Heart left ventricle (tissue), 16 donors: ENCODE measurements at regions of chr16 and their contacts with region 1.

Region 1: DNA sequence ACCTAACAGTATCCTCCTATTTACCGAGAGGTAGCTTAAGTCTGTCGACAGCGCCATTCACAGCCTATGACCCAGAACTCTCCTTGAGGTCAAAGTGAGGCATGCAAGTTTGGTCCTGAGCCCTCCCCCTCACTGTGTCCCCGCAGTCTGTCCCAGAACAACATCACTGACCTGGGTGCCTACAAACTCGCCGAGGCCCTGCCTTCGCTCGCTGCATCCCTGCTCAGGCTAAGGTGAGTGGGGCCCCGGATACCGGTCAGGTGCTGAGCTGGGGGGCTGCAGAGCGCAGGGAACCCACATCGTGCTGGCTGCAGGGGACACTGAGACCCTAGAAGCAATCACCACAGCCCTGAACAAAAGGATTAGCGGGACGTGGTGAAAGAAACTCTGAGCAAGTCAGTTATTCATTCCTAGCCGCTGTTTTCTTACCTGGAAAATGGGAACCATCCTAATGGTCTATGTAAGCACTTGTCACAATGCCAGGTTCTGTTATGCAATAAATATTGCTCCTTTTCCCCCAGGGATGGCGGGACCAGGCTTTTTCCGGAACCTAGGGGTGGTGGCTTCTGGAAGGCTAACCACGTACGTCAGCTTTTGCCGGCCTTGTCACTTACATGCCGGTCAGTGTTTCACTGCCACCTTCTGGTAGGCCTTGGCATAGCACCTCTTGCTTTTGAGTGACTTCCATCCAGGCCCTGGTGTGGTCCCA is 23.8 kb downstream of the DEXI start:
- DNase-seq: peak; percentile 91 to 95 (median 94)
- ATAC-seq: peak; percentile 34 to 78 (median 71)
- H3K4me3 ChIP-seq: peak overlapping the region in 7 of 12 donors; percentile 14 to 51 (median 27)
- H3K27ac ChIP-seq: peak overlapping the region in 10 of 12 donors; percentile 26 to 72 (median 64)
- H3K4me1 ChIP-seq: peaks cover 15 to 58% (median 38%) of the 10 kb centered on the region in 12 donors
- H3K27me3 ChIP-seq: no peaks in the 10 kb centered on the region
- CTCF ChIP-seq: peak; percentile 91 to 99 (median 97)
- POLR2A ChIP-seq: no peak

Region 2: DNA sequence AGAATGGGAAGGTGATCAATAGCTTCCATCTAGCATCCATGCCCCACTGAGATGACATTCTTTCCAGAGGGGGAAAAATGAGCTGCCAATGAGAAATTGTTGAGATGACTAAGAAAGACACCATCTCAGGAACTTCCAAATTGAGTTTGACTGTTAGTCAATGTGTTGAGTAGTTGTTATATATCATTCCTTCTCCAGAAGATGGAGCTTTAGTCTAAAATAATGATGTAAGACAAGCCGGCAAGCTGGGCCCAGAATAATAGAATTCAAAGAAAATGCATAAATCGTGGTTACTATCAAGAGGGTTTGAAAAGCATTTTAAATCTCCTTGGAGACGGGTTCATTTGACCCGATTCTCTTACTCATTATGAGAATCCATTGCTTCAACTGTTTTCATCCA is 603.6 kb before region 1 on chr16:
- intact Hi-C with region 1: loop called in 1 of 10 experiments (anchors 10 kb)
- DNase-seq: no peak
- ATAC-seq: no peak
- H3K4me3 ChIP-seq: no peak overlapping the region
- H3K27ac ChIP-seq: no peak overlapping the region
- H3K4me1 ChIP-seq: no peaks in the 10 kb centered on the region
- H3K27me3 ChIP-seq: no peaks in the 10 kb centered on the region
- CTCF ChIP-seq: peak in 9 of 12 donors; percentile 12 to 55 (median 41)
- POLR2A ChIP-seq: no peak

Region 3: GRCh38 chr16:10521681-10522274 is 396.7 kb before region 1 on chr16:
- intact Hi-C with region 1: loop called in 8 of 10 experiments (anchors 2 to 10 kb)
- DNase-seq: peak in 4 of 5 donors; percentile 48 to 60 (median 55)
- ATAC-seq: peak; percentile 57 to 87 (median 70)
- H3K4me3 ChIP-seq: no peak overlapping the region
- H3K27ac ChIP-seq: no peak overlapping the region
- H3K4me1 ChIP-seq: no peaks in the 10 kb centered on the region
- H3K27me3 ChIP-seq: no peaks in the 10 kb centered on the region
- CTCF ChIP-seq: peak; percentile 64 to 93 (median 80)
- POLR2A ChIP-seq: no peak

Region 4: DNA sequence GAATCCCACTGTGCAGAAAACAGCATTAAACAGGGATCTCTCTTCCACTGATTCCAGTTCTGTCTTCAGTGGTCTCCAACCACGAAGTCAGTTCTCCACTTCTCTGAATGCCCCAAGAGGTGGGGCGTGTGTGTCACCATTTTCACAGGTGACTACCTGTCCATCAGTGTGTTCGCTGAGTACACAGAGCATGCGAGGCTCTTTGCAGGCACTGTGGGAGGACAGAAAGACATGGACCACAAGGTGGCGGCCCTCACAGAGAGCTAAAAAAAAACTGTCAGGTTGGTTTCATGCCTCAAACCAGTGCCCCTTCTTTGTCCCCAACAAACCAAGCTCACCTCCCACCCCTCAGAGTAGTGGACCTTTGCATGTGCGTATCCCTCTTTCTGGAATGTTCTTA is 351.9 kb before region 1 on chr16:
- intact Hi-C with region 1: loop called in 1 of 10 experiments (anchors 10 kb)
- DNase-seq: no peak
- ATAC-seq: no peak
- H3K4me3 ChIP-seq: no peak overlapping the region
- H3K27ac ChIP-seq: peak overlapping the region in 2 of 12 donors; percentile 65 to 84
- H3K4me1 ChIP-seq: peaks cover 4 to 77% (median 57%) of the 10 kb centered on the region in 12 donors
- H3K27me3 ChIP-seq: no peaks in the 10 kb centered on the region
- CTCF ChIP-seq: no peak
- POLR2A ChIP-seq: no peak

Region 5: DNA sequence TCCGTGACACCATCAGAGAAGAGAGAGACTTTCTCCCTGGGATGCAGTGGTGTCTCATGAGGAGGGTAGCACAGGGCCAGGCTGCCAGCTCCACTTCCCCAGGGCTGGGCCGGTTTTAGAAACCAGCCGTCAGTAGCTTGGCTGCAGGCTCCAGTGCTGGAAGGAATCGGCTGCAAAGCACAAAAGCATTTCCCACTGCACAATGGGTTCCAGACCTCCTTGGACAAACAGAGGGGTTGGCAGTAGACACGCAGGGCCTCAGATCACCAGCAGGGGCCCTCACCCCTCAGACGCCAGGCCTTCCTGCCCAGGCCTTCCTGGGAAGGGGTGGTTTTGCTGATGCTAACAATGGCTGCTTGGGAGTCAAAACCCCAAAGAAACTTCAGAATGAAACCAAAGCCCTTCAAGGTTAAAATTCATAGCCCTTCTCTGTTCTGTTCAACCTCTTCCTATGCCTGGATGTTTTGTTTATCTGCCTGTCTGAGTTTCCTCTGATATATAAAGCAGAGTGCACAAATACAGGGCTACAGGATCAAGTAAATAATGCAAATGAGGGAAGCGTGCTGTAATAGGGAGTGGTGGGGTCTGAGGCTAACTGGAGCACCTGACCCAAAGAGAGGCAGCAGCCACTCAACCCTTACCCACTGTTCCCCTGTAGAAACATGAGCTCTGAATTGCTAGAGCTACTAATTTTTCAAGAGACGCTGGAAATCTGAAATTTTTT is 250.0 kb before region 1 on chr16:
- intact Hi-C with region 1: loop called in 1 of 10 experiments (anchors 5 kb)
- DNase-seq: no peak
- ATAC-seq: peak; percentile 47 to 62 (median 54)
- H3K4me3 ChIP-seq: no peak overlapping the region
- H3K27ac ChIP-seq: no peak overlapping the region
- H3K4me1 ChIP-seq: peaks cover 0 to 3% (median 0%) of the 10 kb centered on the region in 12 donors
- H3K27me3 ChIP-seq: no peaks in the 10 kb centered on the region
- CTCF ChIP-seq: peak; percentile 19 to 57 (median 40)
- POLR2A ChIP-seq: no peak

Region 6: GRCh38 chr16:10743610-10744393 is 174.6 kb before region 1 on chr16 and contains the start of gene NUBP1:
- intact Hi-C with region 1: loop called in 9 of 10 experiments (anchors 2 to 5 kb)
- DNase-seq: peak; percentile 99
- ATAC-seq: peak; percentile 96 to 97 (median 97)
- H3K4me3 ChIP-seq: peak within 1 kb of the TSS; percentile 18 to 82 (median 64)
- H3K27ac ChIP-seq: peak within 1 kb of the TSS; percentile 95 to 100 (median 98)
- H3K4me1 ChIP-seq: peaks cover 5 to 43% (median 28%) of the 10 kb centered on the region in 12 donors
- H3K27me3 ChIP-seq: no peaks in the 10 kb centered on the region
- CTCF ChIP-seq: peak in 1 of 12 donors; percentile 7
- POLR2A ChIP-seq: peak; percentile 93 to 98
- total RNA-seq, gene NUBP1: 34.0 to 54.8 (median 47.9) TPM

Region 7: DNA sequence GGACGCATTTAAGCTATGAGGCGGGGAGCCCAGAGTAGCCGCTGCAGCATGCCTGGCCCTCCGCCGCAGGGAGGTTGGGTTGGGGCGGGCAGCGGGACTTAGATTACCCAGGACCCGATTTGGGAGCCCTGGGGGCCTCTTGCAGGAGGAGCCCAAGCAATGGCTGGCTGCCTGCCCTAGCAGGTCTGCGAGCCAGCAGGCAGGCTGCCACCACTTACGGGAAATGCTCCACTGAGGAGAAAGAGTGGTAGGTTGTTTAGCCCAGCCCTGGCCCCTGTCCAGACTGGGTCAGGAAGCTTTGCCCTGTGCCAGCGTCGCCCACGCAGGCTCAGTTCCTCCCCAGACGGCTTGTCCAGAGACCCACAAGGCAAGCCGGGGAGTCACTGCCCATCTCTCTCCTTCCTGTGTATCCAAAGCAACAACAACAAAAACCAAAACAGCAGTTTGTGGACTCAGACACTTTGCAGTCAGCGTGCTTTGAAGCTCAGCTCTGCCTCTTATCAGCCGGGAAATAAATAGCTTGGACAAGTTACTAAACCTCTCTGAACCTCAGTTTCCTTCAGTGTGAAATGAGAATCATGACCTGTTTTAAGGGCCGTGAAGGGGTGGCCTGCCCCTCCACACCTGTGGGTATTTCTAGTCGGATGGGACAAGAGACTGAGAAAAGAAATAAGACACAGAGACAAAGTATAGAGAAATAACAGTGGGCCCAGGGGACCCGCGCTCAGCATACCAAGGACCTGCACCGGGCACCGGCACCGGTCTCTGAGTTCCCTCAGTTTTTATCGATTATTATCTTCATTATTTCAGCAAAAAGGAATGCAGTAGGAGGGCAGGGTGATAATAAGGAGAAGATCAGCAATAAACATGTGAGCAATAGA is 89.4 kb before region 1 on chr16:
- intact Hi-C with region 1: loop called in 9 of 10 experiments (anchors 2 to 10 kb)
- DNase-seq: peak; percentile 93 to 98 (median 96)
- ATAC-seq: peak; percentile 82 to 92 (median 86)
- H3K4me3 ChIP-seq: peak overlapping the region in 6 of 12 donors; percentile 6 to 16 (median 10)
- H3K27ac ChIP-seq: peak overlapping the region; percentile 91 to 99 (median 94)
- H3K4me1 ChIP-seq: peaks cover 3 to 51% (median 33%) of the 10 kb centered on the region in 12 donors
- H3K27me3 ChIP-seq: no peaks in the 10 kb centered on the region
- CTCF ChIP-seq: no peak
- POLR2A ChIP-seq: no peak

Region 8: GRCh38 chr16:10851512-10851911 is 66.9 kb before region 1 on chr16:
- intact Hi-C with region 1: no loop called
- DNase-seq: no peak
- ATAC-seq: no peak
- H3K4me3 ChIP-seq: no peak overlapping the region
- H3K27ac ChIP-seq: peak overlapping the region in 1 of 12 donors; percentile 70
- H3K4me1 ChIP-seq: peaks cover 0 to 52% (median 0%) of the 10 kb centered on the region in 12 donors
- H3K27me3 ChIP-seq: no peaks in the 10 kb centered on the region
- CTCF ChIP-seq: no peak
- POLR2A ChIP-seq: no peak